Mucosa of descending colon (tissue), 3 donors: ENCODE measurements at regions of chr1 and their contacts with region 1.

Region 1: GRCh38 chr1:96966536-96967138 is 245.1 kb downstream of the PTBP2 start:
- DNase-seq: peak; percentile 46 to 91 (median 73)
- ATAC-seq: peak; percentile 86
- H3K4me3 ChIP-seq: no peak overlapping the region
- H3K4me1 ChIP-seq: no peaks in the 10 kb centered on the region
- CTCF ChIP-seq: peak; percentile 90

Region 2: GRCh38 chr1:97070376-97070775 is 103.7 kb after region 1 on chr1:
- intact Hi-C with region 1: no loop called
- DNase-seq: no peak
- ATAC-seq: peak; percentile 49
- H3K4me3 ChIP-seq: no peak overlapping the region
- H3K4me1 ChIP-seq: no peaks in the 10 kb centered on the region
- CTCF ChIP-seq: no peak

Region 3: GRCh38 chr1:97820470-97821188 is 854.0 kb after region 1 on chr1:
- intact Hi-C with region 1: loop called in 1 of 2 experiments (anchors 10 kb)
- DNase-seq: peak in 1 of 3 donors; percentile 13
- ATAC-seq: peak; percentile 55
- H3K4me3 ChIP-seq: no peak overlapping the region
- H3K4me1 ChIP-seq: no peaks in the 10 kb centered on the region
- CTCF ChIP-seq: no peak

Region 4: DNA sequence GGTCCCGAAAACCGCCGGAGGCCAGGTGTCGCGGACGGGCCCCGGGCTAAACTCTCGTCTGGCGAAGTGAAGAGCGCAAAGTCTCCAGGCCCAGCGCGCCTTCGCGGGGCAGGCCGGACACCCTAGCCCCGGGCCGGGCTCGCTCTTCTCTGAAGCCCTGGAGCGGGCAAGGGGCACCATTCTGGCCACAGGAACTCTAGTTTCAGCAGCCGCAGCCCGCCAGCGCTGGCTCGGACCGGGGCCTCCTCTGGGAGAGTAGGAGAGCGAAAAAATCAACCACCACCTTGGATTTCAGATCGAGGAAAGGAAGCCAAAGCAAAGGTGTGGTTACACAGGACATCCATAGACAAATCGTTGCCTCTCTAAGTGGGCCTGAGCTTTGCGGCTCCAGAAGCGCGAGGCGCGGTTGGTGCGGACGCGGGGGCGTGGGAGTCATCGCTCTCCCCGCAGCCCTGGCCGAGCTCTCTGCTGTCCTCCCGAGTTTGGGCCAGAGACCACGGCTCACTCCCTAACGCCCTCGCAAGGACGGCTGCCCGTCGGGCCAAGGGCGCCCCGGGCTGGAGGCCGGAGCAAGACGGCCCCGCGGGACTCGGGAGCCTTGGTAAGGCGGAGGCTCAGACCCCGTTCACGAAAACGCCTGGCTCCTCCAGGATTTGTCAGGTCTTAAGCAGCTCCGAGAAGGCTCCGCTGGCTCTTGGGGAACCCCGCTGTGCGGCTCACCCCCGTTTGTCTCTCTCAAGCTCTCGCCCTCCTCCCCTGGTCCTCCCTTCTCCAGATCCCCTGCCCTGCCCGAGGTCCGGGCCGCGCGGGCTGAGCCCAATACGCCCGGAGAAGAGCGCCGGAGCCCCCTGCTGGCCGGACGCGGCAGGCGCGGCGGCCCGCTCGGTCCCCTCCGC is 1087.1 kb after region 1 on chr1:
- intact Hi-C with region 1: loop called (anchors 5 to 10 kb)
- DNase-seq: peak; percentile 54 to 70 (median 59)
- ATAC-seq: peak; percentile 96
- H3K4me3 ChIP-seq: no peak overlapping the region
- H3K4me1 ChIP-seq: peaks cover 9% of the 10 kb centered on the region
- CTCF ChIP-seq: peak; percentile 92